IMR-90 (cell line): ENCODE measurements at regions of chr2 and their contacts with region 1.

Region 1: GRCh38 chr2:22347306-22347705 is 1037.7 kb upstream of the KLHL29 start:
- DNase-seq: no peak
- ATAC-seq: no peak
- H3K4me3 ChIP-seq: no peak overlapping the region
- H3K27ac ChIP-seq: no peak overlapping the region
- H3K4me1 ChIP-seq: no peaks in the 10 kb centered on the region
- H3K27me3 ChIP-seq: no peaks in the 10 kb centered on the region
- CTCF ChIP-seq: no peak
- POLR2A ChIP-seq: no peak
- RAD21 ChIP-seq: no peak

Region 2: DNA sequence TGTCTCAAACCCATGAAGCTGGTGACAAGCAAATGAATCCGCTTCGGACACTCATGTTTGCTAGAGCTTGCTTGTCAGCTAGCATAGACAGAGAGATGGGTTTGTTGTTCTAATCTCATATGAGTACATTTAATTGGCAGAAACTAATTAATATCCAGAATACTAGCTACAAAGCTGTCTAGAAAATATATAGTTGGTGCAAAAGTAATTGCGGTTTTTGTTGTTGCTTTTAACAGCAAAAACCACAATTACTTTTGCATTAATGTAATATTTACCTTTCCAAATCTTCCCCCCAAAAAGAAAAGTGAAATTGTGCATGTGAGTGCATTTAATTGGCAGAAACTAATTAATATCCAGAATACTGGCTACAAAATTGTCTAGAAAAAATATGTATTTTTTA is 108.3 kb before region 1 on chr2:
- CTCF ChIA-PET with region 1: no interaction called
- POLR2A ChIA-PET with region 1: no interaction called
- dilution Hi-C with region 1: no loop called
- in situ Hi-C with region 1: no loop called
- intact Hi-C with region 1: loop called (anchors 5 kb)
- DNase-seq: no peak
- ATAC-seq: no peak
- H3K4me3 ChIP-seq: no peak overlapping the region
- H3K27ac ChIP-seq: no peak overlapping the region
- H3K4me1 ChIP-seq: no peaks in the 10 kb centered on the region
- H3K27me3 ChIP-seq: no peaks in the 10 kb centered on the region
- CTCF ChIP-seq: no peak
- POLR2A ChIP-seq: no peak
- RAD21 ChIP-seq: no peak

Region 3: DNA sequence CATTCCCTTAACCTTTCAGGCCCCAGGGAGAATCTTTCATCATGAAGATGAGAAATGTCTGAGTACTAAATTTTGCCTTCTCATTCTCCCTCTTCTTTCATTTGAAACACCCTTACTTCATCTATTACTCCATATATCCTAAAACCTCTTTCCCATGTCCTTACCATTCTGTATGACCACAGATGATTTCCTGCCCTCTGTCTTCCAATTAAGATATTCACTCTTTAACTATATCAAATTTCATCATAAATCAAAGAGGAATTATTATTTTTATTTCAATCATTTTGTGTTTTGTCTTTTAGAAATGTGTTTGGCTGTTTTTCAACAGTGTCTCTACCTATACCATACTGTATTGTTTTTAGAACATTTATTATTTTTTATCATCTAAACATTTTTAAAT is 72.8 kb after region 1 on chr2:
- CTCF ChIA-PET with region 1: no interaction called
- POLR2A ChIA-PET with region 1: no interaction called
- dilution Hi-C with region 1: no loop called
- in situ Hi-C with region 1: no loop called
- intact Hi-C with region 1: no loop called
- DNase-seq: no peak
- ATAC-seq: no peak
- H3K4me3 ChIP-seq: no peak overlapping the region
- H3K27ac ChIP-seq: no peak overlapping the region
- H3K4me1 ChIP-seq: no peaks in the 10 kb centered on the region
- H3K27me3 ChIP-seq: no peaks in the 10 kb centered on the region
- CTCF ChIP-seq: no peak
- POLR2A ChIP-seq: no peak
- RAD21 ChIP-seq: no peak